ENCODE measurements at regions of chr1 and their contacts with region 1.

Region 1: GRCh38 chr1:87328272-87329050 is at the start of gene LMO4:
- DNase-seq: peak; percentile 95
- H3K4me3 Mint-ChIP-seq: peak within 1 kb of the TSS; percentile 94
- H3K27ac Mint-ChIP-seq: peak within 1 kb of the TSS; percentile 90
- H3K4me1 Mint-ChIP-seq: peaks cover 20% of the 10 kb centered on the region
- H3K27me3 Mint-ChIP-seq: no peaks in the 10 kb centered on the region
- CTCF ChIP-seq: no peak
- total RNA-seq, gene LMO4: 95.0 and 132 TPM in 2 replicates

Region 2: DNA sequence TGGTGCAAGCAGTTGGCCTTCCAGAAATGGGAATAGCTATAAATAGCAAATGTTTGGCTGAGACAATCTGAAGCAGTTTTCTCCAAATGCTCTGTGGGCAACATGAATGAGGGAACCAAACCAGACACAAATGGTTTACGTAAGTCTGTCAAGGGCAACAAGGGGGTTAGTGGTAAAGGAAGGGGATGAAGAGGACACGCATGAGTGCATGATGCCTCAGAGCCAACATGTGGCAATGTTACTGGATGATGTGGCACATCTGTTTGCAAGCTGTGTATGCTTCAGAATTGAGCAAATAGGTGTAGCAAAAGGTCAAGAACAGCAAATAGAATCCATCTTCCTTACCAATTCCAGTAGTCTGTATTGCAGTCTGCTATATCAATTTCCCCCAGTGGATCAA is 76.1 kb before region 1 on chr1:
- CTCF ChIA-PET with region 1: no interaction called
- intact Hi-C with region 1: no loop called
- DNase-seq: no peak
- H3K4me3 Mint-ChIP-seq: no peak overlapping the region
- H3K27ac Mint-ChIP-seq: no peak overlapping the region
- H3K4me1 Mint-ChIP-seq: peaks cover 26% of the 10 kb centered on the region
- H3K27me3 Mint-ChIP-seq: no peaks in the 10 kb centered on the region
- CTCF ChIP-seq: no peak

Region 3: GRCh38 chr1:87392248-87393192 is 64.1 kb after region 1 on chr1:
- CTCF ChIA-PET with region 1: interaction called, 7 read pairs
- intact Hi-C with region 1: loop called (anchors 2 kb)
- DNase-seq: peak; percentile 39
- H3K4me3 Mint-ChIP-seq: peak overlapping the region; percentile 16
- H3K27ac Mint-ChIP-seq: peak overlapping the region; percentile 50
- H3K4me1 Mint-ChIP-seq: peaks cover 32% of the 10 kb centered on the region
- H3K27me3 Mint-ChIP-seq: no peaks in the 10 kb centered on the region
- CTCF ChIP-seq: no peak

Region 4: DNA sequence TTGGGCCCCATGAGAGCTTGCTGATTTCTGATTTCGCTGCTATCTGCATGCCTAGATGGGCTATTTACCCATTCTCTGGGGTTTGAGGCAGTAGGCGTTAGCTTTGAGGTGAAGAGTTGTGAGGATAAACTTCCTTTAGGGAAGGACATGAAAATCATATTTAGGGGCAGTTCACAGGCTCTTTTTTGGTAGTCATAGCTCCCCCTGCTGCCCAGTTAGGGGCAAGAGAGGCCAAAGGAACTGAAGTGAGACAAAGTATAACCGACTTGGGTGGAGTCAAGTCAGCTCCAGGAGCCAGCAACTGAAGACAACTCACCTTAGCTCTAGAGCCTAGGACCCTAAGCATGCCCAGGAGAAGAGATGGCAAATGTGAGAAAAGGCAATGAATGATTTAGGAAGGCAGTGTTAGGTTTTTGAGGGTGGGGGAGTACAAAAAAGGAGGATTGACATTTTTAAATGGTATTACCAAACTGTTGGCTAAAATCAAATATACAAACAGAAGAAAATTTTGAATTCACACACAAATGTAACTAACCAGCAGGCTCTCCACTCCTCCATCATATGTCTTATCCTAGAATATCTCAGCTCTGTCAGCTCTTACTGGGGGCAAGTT is 625.4 kb after region 1 on chr1:
- CTCF ChIA-PET with region 1: interaction called, 3 read pairs
- intact Hi-C with region 1: loop called (anchors 5 kb)
- DNase-seq: peak; percentile 75
- H3K4me3 Mint-ChIP-seq: no peak overlapping the region
- H3K27ac Mint-ChIP-seq: peak overlapping the region; percentile 50
- H3K4me1 Mint-ChIP-seq: peaks cover 33% of the 10 kb centered on the region
- H3K27me3 Mint-ChIP-seq: no peaks in the 10 kb centered on the region
- CTCF ChIP-seq: peak; percentile 66

Region 5: DNA sequence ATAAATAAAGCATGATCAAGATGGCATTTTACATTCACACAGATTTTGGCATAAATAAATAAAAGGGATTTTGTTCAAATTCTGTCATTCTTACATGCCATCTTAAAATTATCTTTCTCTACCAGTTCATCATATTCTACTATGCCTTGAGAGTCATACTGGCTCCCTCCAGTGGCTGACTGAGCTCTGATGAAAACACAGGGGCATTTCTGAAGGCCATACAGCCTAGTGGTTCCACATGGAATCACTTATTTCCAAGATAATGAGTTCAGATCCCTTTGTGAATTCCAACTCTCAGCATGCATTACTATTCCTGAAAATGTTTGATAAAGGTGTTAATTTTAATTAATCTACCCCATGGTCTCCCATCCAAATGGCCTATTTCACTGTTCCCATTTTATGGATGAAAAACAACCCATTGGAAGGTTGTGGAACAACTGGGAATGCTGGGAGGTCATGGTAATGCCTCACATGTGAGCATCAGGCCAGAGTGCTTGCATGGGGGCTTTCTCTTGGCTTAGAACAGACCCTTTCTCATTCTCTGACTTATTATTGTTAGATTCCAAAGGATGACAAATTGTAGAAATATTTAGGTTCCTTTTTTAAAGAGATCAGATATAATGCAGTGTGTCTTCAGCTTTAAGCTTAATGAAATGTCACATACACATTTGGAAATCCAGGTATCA is 733.2 kb after region 1 on chr1:
- CTCF ChIA-PET with region 1: interaction called, 11 read pairs
- intact Hi-C with region 1: loop called (anchors 10 kb)
- DNase-seq: peak; percentile 69
- H3K4me3 Mint-ChIP-seq: no peak overlapping the region
- H3K27ac Mint-ChIP-seq: no peak overlapping the region
- H3K4me1 Mint-ChIP-seq: peaks cover 35% of the 10 kb centered on the region
- H3K27me3 Mint-ChIP-seq: no peaks in the 10 kb centered on the region
- CTCF ChIP-seq: peak; percentile 71